ENCODE measurements at regions of chr9 and their contacts with region 1.

Region 1: DNA sequence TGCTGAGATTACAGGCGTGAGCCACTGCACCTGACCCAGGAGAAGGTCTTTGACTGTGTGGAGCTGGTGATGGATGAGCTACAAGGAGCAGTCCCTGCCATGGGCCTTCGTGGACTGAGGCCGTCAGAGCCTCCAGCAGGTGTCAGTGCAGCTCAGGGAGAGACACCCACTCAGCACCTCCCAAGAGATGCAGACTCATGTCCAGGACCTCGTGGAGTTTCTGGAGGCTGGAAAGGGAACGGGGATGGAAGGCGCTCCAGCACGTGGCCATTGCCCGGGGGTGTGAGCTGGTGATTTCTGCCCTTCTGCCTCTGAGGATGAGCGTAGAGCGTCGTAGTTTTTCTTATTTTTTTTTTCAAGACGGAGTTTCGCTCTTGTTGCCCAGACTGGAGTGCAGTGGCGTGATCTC is 9.5 kb downstream of the TOR4A start:
- DNase-seq: peak; percentile 79
- H3K4me3 ChIP-seq: no peak overlapping the region
- H3K27ac ChIP-seq: no peak overlapping the region
- H3K4me1 ChIP-seq: peaks cover 4% of the 10 kb centered on the region
- H3K27me3 ChIP-seq: no peaks in the 10 kb centered on the region
- CTCF ChIP-seq: peak; percentile 65 to 86
- POLR2A ChIP-seq: no peak

Region 2: GRCh38 chr9:137262909-137263285 is 24.1 kb before region 1 on chr9:
- CTCF ChIA-PET with region 1: no interaction called
- POLR2A ChIA-PET with region 1: no interaction called
- dilution Hi-C with region 1: no loop called
- intact Hi-C with region 1: no loop called
- DNase-seq: no peak
- H3K4me3 ChIP-seq: no peak overlapping the region
- H3K27ac ChIP-seq: no peak overlapping the region
- H3K4me1 ChIP-seq: peaks cover 3% of the 10 kb centered on the region
- H3K27me3 ChIP-seq: no peaks in the 10 kb centered on the region
- CTCF ChIP-seq: no peak
- POLR2A ChIP-seq: no peak

Region 3: GRCh38 chr9:137406876-137407589 is 120.1 kb after region 1 on chr9:
- CTCF ChIA-PET with region 1: interaction called, 10 read pairs
- POLR2A ChIA-PET with region 1: no interaction called
- dilution Hi-C with region 1: no loop called
- intact Hi-C with region 1: no loop called
- DNase-seq: peak; percentile 85
- H3K4me3 ChIP-seq: peak overlapping the region in 1 of 3 experiments; percentile 17
- H3K27ac ChIP-seq: no peak overlapping the region
- H3K4me1 ChIP-seq: peaks cover 24% of the 10 kb centered on the region
- H3K27me3 ChIP-seq: no peaks in the 10 kb centered on the region
- CTCF ChIP-seq: peak; percentile 83 to 87
- POLR2A ChIP-seq: no peak

Region 4: GRCh38 chr9:137445275-137445807 is 158.4 kb after region 1 on chr9:
- CTCF ChIA-PET with region 1: interaction called, 42 read pairs
- POLR2A ChIA-PET with region 1: no interaction called
- dilution Hi-C with region 1: no loop called
- intact Hi-C with region 1: loop called (anchors 1 kb)
- DNase-seq: peak; percentile 78
- H3K4me3 ChIP-seq: no peak overlapping the region
- H3K27ac ChIP-seq: no peak overlapping the region
- H3K4me1 ChIP-seq: no peaks in the 10 kb centered on the region
- H3K27me3 ChIP-seq: no peaks in the 10 kb centered on the region
- CTCF ChIP-seq: peak; percentile 77 to 87
- POLR2A ChIP-seq: no peak

Region 5: DNA sequence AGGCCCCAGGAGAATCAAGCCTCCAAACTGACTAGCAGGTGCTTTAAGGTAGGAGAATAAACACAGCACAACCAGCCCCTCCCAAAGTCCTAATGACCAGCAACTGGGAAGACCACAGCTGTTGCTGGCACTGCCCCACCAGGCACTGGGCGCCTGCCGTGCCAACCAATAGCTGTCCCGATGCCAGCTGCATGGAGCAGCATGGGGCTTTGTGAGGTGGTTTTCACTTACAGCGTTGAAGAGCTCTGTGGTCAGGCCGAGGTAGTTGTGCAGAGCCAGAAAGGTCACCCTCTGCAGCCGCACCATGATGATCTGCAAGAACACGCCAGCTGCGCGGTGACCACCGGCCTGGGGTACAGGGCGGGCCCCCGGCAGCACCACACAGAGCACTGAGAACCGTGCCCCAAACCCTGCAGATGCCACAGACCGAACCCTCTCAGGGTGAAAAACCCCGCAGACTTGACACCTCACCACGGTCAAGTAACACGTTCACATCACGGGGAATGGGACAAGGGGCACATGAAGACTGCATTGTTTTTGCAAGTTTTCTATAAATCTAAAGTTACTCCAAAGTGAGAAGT is 234.5 kb after region 1 on chr9:
- CTCF ChIA-PET with region 1: interaction called, 9 read pairs
- POLR2A ChIA-PET with region 1: no interaction called
- dilution Hi-C with region 1: no loop called
- intact Hi-C with region 1: loop called (anchors 1 kb)
- DNase-seq: no peak
- H3K4me3 ChIP-seq: no peak overlapping the region
- H3K27ac ChIP-seq: no peak overlapping the region
- H3K4me1 ChIP-seq: no peaks in the 10 kb centered on the region
- H3K27me3 ChIP-seq: no peaks in the 10 kb centered on the region
- CTCF ChIP-seq: no peak
- POLR2A ChIP-seq: no peak

Measured in endothelial cell of umbilical vein (primary cell).